GM23248 (cell line): ENCODE measurements at regions of chr2 and their contacts with region 1.

Region 1: GRCh38 chr2:158179660-158180059 is 78.0 kb downstream of the UPP2 start:
- DNase-seq: peak; percentile 49
- H3K4me3 ChIP-seq: no peak overlapping the region
- H3K27ac ChIP-seq: no peak overlapping the region
- H3K4me1 ChIP-seq: no peaks in the 10 kb centered on the region
- H3K27me3 ChIP-seq: peaks cover 6% of the 10 kb centered on the region; the same call in 1 of the 2 replicates

Region 2: DNA sequence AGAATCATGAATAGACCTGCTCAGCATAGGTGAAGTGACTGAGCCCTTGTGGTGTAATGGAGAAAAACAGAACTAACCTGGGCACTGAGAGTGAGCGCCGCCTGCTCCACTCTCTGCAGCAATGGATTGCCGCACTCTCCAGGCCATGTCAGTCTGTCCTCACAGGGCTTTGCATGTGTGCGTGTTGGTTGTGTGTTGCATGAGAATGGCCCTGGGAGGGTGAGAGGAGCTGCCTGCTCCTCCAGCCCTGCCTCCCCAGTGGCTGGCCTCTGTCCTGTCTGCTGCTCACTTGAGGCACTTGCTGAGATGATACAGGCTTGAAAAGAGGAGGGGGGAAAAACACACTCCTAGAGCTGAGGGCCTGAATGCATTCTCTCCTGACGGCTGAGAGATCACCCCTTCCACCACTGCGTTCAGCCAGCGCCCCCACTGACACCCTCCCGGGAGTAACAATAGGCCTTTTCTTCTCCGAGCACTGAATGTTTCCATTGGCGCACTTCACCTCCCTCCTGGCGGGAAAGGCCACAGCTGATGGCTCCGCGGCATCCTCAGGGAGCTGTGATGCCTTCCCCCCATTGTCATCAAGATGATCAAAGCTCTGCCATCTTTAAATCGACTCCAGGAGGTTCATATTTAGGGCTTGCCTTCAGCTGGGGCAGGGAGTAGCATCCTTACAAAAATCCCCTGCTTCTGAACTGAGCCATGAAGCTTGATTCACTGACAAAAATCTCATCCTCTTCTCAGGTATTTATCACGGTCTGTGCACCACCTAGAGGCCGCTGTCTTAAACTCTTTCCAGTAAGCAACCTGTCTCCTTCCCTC is 565.6 kb after region 1 on chr2:
- in situ Hi-C with region 1: loop called (anchors 25 kb)
- DNase-seq: peak; percentile 72
- H3K4me3 ChIP-seq: no peak overlapping the region
- H3K27ac ChIP-seq: no peak overlapping the region
- H3K4me1 ChIP-seq: no peaks in the 10 kb centered on the region
- H3K27me3 ChIP-seq: peaks cover 30% of the 10 kb centered on the region